ENCODE measurements at regions of chr17 and their contacts with region 1.

Region 1: DNA sequence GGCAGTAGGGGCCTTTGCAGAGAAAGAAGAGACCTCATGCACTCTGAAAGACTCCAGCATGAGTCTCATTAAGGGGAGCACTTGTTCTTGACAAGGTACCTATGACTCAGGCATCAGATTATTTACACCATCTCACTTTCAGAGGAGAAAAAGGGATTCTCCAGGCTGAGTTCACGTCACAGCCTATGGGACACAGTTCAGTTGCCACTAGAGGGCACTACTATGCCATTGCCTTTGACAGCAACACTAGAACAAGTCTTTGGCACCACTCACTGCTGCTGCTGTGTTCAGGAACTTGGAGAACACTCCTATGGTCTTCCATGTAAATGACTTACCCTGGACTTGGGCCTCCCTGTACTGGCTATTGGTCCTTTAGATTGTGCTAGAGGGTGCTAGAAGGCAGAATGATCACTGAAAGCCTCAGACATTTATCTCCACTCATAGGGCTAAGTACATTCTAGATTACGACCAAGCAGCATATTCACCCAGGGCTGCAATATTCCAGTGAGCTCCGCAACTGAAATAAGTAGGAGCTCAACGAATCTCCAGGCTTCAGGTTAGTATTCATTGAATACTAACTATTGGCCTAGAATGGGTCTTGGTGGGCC is 225.1 kb upstream of the CA10 start:
- DNase-seq: peak; percentile 55
- H3K4me3 ChIP-seq: peak overlapping the region in 1 of 2 experiments; percentile 39; a peak in 1 of 4 replicates
- H3K27ac ChIP-seq: no peak overlapping the region
- H3K4me1 ChIP-seq: no peaks in the 10 kb centered on the region
- H3K27me3 ChIP-seq: no peaks in the 10 kb centered on the region
- CTCF ChIP-seq: peak; percentile 68
- EP300 ChIP-seq: no peak
- RAD21 ChIP-seq: peak; percentile 91

Region 2: GRCh38 chr17:51820252-51820651 is 563.3 kb before region 1 on chr17:
- CTCF ChIA-PET with region 1: no interaction called
- POLR2A ChIA-PET with region 1: no interaction called
- DNase-seq: no peak
- H3K4me3 ChIP-seq: no peak overlapping the region
- H3K27ac ChIP-seq: no peak overlapping the region
- H3K4me1 ChIP-seq: peaks cover 0 to 4% of the 10 kb centered on the region in 2 experiments; a peak in 1 of 4 replicates
- H3K27me3 ChIP-seq: no peaks in the 10 kb centered on the region
- CTCF ChIP-seq: no peak
- EP300 ChIP-seq: no peak
- RAD21 ChIP-seq: no peak

Region 3: GRCh38 chr17:52306314-52306713 is 77.3 kb before region 1 on chr17:
- CTCF ChIA-PET with region 1: no interaction called
- POLR2A ChIA-PET with region 1: no interaction called
- DNase-seq: no peak
- H3K4me3 ChIP-seq: no peak overlapping the region
- H3K27ac ChIP-seq: no peak overlapping the region
- H3K4me1 ChIP-seq: no peaks in the 10 kb centered on the region
- H3K27me3 ChIP-seq: no peaks in the 10 kb centered on the region
- CTCF ChIP-seq: no peak
- EP300 ChIP-seq: no peak
- RAD21 ChIP-seq: no peak

Region 4: DNA sequence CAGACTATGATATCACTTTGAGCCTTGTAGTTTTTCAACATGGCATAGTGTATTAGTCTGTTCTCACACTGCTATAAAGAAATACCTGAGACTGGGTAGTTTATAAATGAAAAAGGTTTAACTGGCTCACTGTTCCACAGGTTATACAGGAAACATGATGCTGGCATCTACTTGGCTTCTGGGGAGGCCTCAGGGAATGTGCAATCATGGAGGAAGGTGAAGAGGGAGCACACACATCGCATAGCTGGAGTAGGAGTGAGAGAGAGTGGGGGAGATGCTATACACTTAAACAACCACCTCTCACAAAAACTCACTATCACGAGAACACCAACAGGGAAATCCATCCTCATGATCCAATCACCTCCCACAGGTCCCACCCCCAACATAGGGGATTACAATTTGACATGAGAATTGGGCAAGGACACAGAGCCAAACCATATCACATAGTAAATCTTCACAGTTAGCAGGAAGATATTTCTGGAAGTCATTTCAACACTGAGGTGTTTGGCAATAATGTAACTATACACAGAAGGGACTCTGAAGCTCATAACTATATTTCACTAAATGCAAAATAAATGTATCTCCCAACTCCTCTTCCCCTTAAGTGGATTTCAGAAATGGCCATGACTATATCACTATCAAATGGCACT is 10.2 kb before region 1 on chr17:
- CTCF ChIA-PET with region 1: interaction called, 19 read pairs
- POLR2A ChIA-PET with region 1: no interaction called
- DNase-seq: no peak
- H3K4me3 ChIP-seq: no peak overlapping the region
- H3K27ac ChIP-seq: no peak overlapping the region
- H3K4me1 ChIP-seq: no peaks in the 10 kb centered on the region
- H3K27me3 ChIP-seq: no peaks in the 10 kb centered on the region
- CTCF ChIP-seq: no peak
- EP300 ChIP-seq: no peak
- RAD21 ChIP-seq: no peak

Region 5: DNA sequence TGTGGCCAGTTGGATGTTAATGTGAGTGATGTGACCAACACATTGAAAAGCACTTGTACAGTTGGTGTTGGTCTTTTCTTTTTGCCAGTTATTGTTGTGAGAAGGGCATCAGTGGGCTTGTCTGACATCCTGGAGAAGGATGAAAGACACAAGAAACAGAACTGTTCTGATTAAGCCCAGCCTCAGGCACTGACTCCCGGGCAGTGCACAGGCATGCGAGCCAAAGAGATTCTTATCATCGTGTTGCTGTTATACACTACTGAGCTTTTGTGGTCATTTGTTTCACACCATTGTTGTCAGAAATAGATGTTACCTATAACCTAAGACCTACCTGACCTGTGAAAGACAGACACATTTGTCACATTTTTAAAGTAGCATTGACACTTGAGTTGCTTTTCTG is 11.7 kb after region 1 on chr17:
- CTCF ChIA-PET with region 1: interaction called, 49 read pairs
- POLR2A ChIA-PET with region 1: no interaction called
- DNase-seq: peak; percentile 21
- H3K4me3 ChIP-seq: no peak overlapping the region
- H3K27ac ChIP-seq: no peak overlapping the region
- H3K4me1 ChIP-seq: peaks cover 0 to 4% of the 10 kb centered on the region in 2 experiments; a peak in 2 of 4 replicates
- H3K27me3 ChIP-seq: no peaks in the 10 kb centered on the region
- CTCF ChIP-seq: no peak
- EP300 ChIP-seq: no peak
- RAD21 ChIP-seq: no peak

Region 6: DNA sequence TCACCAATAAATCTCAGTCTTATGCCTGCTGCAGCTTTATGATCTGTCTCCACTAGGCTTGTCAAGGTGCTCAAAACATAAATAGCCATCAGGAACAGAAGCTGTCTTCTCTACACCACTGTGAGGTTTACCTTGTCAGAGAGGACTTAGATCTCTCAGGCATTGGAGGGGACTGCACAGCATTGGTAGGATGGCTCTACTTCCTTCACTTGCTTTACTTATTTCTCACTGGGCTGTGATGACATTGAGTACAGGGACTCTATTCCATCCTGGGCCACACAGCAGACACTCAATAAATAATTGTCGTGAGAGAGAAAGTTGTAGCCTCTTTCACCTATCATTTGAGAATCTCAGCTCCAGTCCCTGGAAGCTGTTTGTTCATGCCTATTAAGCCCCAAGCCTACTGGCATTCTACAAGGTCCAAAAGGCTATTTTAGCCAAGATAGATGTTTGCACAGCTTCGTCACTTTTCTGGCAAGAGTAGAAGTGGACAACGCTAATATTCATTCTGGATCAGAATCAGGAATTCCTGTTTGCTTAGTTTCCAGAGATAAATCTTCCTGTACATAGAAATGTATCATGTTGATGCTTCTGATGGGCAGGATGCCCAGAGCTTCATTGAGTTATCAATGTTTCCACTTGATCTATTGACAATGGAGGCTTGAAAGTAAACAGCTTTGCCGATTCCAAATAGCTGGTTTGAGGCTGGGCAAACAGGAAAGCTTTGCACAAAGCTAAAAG is 35.5 kb after region 1 on chr17:
- CTCF ChIA-PET with region 1: no interaction called
- POLR2A ChIA-PET with region 1: no interaction called
- DNase-seq: no peak
- H3K4me3 ChIP-seq: no peak overlapping the region
- H3K27ac ChIP-seq: no peak overlapping the region
- H3K4me1 ChIP-seq: no peaks in the 10 kb centered on the region
- H3K27me3 ChIP-seq: no peaks in the 10 kb centered on the region
- CTCF ChIP-seq: no peak
- EP300 ChIP-seq: no peak
- RAD21 ChIP-seq: no peak

Measured in SK-N-SH (cell line).